Colonic mucosa (tissue), 4 donors: ENCODE measurements at regions of chr13 and their contacts with region 1.

Region 1: GRCh38 chr13:106917673-106918556 is 350.0 kb upstream of the ARGLU1 start:
- DNase-seq: peak; percentile 78
- H3K4me3 ChIP-seq: peak overlapping the region; percentile 56
- H3K27ac ChIP-seq: peak overlapping the region; percentile 8
- H3K4me1 ChIP-seq: no peaks in the 10 kb centered on the region
- H3K27me3 ChIP-seq: no peaks in the 10 kb centered on the region
- CTCF ChIP-seq: peak; percentile 97

Region 2: DNA sequence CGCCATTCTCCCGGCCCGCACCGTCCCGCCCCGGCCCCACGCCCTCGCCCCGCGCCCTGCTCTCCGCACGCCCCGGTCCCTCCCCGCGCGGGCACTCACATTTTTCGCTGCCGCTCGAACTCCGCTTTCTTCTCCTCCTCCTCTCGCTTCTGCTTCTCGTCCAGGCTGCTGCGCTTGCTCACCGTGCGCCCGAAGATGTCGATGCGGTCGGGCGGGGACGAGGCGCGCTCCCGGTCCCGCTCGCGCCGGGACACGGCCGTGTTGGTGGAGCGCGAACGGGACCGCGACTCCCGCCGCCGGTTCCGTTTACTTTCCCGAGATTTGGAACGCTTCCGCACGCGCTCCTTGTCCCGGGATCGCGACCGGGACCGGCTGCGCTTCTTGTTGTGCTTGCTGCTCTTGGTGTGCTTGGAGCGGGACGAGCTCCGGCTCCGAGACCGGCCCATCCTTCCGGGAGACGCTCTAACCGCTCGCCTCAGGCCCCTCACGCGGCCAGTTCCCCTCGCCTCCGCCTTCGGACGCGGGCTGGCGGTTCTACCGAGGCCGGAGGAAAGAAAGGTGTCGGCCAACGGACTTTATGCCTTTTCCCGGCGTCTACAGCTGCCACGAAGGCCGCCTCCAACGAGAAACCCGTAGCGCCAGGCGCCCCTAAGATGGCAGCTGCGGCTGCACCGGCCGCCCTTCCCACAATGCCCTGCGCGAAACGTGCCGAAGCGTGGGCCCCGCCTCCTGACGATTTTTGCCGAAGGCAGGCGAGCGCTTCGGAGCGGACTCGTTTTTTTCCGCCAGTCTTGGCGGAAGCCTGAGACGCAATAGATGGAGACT is 350.2 kb before region 1 on chr13 and contains the start of gene ARGLU1:
- intact Hi-C with region 1: loop called (anchors 10 kb)
- DNase-seq: peak; percentile 95
- H3K4me3 ChIP-seq: peak within 1 kb of the TSS; percentile 81
- H3K27ac ChIP-seq: peak within 1 kb of the TSS; percentile 99
- H3K4me1 ChIP-seq: peaks cover 9% of the 10 kb centered on the region
- H3K27me3 ChIP-seq: no peaks in the 10 kb centered on the region
- CTCF ChIP-seq: no peak
- total RNA-seq, gene ARGLU1: 58.7 to 60.0 TPM